ENCODE measurements at regions of chr6 and their contacts with region 1.

Region 1: DNA sequence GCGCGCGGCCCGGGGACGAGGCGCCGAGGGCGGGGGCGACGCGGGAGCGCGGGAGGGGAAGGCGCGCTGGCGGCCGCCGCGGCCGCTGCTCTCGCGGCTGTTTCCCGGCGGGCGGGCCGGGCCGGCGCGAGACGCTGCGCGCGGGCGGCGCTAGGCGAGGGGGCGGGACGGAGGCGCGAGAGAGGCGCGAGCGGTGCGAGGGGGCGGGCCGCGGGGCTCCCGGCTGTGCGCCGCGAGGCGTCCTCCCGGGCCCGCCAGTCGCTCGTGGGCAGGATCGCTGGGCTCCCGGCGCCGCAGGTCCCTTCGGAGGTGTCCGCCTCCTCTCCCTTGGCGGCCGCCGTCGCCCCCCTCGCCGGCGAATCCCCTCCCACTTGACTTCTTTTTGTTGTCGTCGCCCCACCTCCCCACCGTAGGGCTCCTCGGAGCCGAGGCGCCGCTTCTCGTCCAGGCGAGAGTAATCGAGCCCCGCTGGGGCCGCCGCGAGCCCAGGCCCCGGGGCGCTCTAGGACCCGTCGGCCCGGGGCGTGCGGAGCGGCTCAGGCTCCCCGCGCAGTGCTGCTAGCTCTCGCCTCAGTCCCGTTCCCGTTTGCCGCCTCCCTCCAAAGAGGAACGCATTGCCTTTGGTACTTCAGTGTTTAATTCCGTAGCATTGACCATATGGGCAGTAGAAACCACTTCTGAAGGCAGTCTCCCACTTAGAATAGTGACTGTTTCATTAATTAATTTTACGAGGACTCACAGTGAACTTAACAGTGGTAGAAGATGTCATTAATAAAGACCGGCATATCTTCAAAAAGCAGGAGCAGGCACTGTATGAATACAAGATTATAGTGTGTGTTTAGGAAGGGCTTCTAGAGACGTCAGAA is at the start of gene RANBP9:
- DNase-seq: peak; percentile 88
- H3K4me3 Mint-ChIP-seq: peak within 1 kb of the TSS; percentile 87
- H3K27ac Mint-ChIP-seq: peak within 1 kb of the TSS; percentile 89
- H3K4me1 Mint-ChIP-seq: peaks cover 51% of the 10 kb centered on the region
- H3K27me3 Mint-ChIP-seq: no peaks in the 10 kb centered on the region
- total RNA-seq, gene RANBP9: 66.8 to 69.1 TPM

Region 2: DNA sequence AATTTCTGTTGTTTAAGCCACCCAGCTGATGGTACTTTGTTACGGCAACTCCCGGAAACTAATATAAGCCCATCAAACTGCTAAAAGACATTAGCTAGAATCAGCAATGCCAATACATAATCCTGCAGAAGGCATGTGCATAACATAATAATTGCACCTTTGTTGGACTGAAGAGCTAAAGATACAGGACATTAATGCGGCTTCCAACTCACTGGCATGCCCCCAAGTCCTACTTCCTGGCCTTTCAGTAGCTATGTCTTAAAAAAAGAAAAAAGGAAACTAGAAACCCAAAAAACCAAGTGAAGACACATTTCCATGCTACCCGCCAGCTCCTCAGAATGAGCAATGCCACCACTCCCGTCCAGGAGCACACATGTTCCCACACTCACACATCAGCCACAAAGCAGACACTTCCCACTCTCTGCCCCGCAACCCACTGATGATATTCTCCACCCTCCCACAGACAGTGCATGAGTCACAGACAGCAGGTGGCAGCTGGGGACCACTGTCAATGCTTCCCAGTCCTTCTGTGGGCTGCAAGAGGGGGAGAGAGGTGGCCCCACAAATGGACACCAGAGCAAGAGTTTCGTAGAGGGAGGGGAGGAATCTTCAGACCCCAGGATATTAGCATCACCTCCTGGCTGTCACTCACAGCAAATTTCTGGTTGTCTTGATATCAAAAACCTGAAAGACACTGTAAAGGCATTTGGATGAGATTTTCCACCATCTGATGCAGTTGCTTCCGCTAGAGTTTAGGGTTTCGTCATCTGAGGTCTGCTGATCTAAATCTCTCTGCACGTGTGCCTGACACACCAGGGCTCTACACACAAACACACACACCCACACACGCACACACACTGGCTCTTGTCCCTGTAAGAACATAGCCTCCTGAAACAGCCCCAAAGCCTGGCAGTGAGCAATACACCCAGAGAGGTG is 257.4 kb before region 1 on chr6:
- CTCF ChIA-PET with region 1: no interaction called
- POLR2A ChIA-PET with region 1: no interaction called
- DNase-seq: peak; percentile 67
- H3K4me3 Mint-ChIP-seq: no peak overlapping the region
- H3K27ac Mint-ChIP-seq: peak overlapping the region; percentile 8
- H3K4me1 Mint-ChIP-seq: peaks cover 28% of the 10 kb centered on the region
- H3K27me3 Mint-ChIP-seq: no peaks in the 10 kb centered on the region

Region 3: GRCh38 chr6:13586603-13587542 is 125.1 kb before region 1 on chr6:
- CTCF ChIA-PET with region 1: no interaction called
- POLR2A ChIA-PET with region 1: no interaction called
- DNase-seq: no peak
- H3K4me3 Mint-ChIP-seq: no peak overlapping the region
- H3K27ac Mint-ChIP-seq: no peak overlapping the region
- H3K4me1 Mint-ChIP-seq: no peaks in the 10 kb centered on the region
- H3K27me3 Mint-ChIP-seq: no peaks in the 10 kb centered on the region

Region 4: GRCh38 chr6:13681305-13682061 is 30.5 kb before region 1 on chr6:
- CTCF ChIA-PET with region 1: interaction called, 3 read pairs
- POLR2A ChIA-PET with region 1: interaction called, 25 read pairs
- DNase-seq: no peak
- H3K4me3 Mint-ChIP-seq: peak overlapping the region; percentile 51
- H3K27ac Mint-ChIP-seq: peak overlapping the region; percentile 85
- H3K4me1 Mint-ChIP-seq: peaks cover 45% of the 10 kb centered on the region
- H3K27me3 Mint-ChIP-seq: no peaks in the 10 kb centered on the region

Region 5: DNA sequence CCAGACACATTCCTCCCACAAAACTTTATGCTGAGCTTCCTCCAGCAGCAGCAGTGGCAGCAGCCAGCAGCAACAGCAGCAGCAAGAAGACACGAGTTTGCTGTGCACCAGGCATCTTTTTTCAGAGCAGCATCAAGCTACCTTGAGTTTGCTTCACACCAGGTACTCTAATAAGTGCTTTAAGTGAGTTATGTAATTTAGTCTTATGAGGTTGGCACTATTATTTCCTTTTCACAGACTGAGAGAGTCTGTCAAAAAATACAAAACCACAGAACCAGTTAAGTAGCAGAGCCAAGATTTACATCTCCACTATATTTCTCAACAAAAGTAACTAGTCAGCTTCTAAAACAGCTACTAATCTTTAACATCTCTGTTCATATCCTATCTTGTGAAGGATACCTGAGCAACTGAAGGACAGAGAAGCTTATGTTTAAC is 24.0 kb before region 1 on chr6:
- CTCF ChIA-PET with region 1: interaction called, 3 read pairs
- POLR2A ChIA-PET with region 1: interaction called, 27 read pairs
- DNase-seq: no peak
- H3K4me3 Mint-ChIP-seq: no peak overlapping the region
- H3K27ac Mint-ChIP-seq: peak overlapping the region; percentile 58
- H3K4me1 Mint-ChIP-seq: peaks cover 51% of the 10 kb centered on the region
- H3K27me3 Mint-ChIP-seq: no peaks in the 10 kb centered on the region

Region 6: GRCh38 chr6:13696226-13696625 is 15.7 kb before region 1 on chr6:
- CTCF ChIA-PET with region 1: interaction called, 6 read pairs
- POLR2A ChIA-PET with region 1: interaction called, 59 read pairs
- DNase-seq: no peak
- H3K4me3 Mint-ChIP-seq: no peak overlapping the region
- H3K27ac Mint-ChIP-seq: no peak overlapping the region
- H3K4me1 Mint-ChIP-seq: peaks cover 52% of the 10 kb centered on the region
- H3K27me3 Mint-ChIP-seq: no peaks in the 10 kb centered on the region

Region 7: GRCh38 chr6:13742961-13743735 is 31.2 kb after region 1 on chr6:
- CTCF ChIA-PET with region 1: no interaction called
- POLR2A ChIA-PET with region 1: interaction called, 12 read pairs
- DNase-seq: no peak
- H3K4me3 Mint-ChIP-seq: no peak overlapping the region
- H3K27ac Mint-ChIP-seq: no peak overlapping the region
- H3K4me1 Mint-ChIP-seq: peaks cover 17% of the 10 kb centered on the region
- H3K27me3 Mint-ChIP-seq: peaks cover 2% of the 10 kb centered on the region

Region 8: DNA sequence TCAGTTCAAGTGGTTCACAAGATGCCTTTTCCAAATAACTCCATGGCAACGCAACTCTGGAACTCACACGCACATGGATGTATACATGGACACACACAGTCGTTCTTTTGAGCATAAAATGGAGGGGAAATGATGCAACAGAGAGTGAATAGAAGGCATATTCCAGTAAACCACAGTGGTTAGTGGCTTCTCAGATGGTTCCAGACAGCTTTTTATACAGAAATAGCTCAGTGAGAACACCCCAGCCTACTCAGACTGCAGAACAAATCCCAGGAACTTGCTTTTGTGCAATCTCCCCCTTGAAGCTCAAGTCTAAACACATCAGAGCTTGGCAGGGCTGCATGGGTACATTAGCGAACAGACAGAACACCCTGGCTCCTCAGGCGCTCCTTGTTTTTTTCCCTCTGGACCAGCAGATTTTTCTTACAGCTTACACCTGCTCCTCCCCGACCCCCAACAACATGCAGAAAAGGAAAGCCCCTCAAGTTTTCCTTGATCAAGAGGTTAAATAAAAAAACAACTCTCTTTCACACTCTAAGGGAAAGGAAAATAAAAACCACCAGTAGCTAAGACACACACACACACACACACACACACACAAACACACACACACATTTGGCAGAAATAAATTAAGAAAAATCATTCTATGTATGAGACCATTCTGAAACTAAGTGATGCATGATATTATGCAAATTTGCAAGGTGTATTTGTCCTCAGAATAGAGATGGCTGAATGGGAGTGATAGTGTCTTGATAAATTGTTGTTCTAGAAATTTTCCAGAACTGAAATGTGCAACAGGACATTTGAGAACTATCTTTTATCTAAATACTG is 50.9 kb after region 1 on chr6:
- CTCF ChIA-PET with region 1: interaction called, 3 read pairs
- POLR2A ChIA-PET with region 1: interaction called, 14 read pairs
- DNase-seq: peak; percentile 34
- H3K4me3 Mint-ChIP-seq: peak overlapping the region; percentile 54
- H3K27ac Mint-ChIP-seq: peak overlapping the region; percentile 76
- H3K4me1 Mint-ChIP-seq: peaks cover 57% of the 10 kb centered on the region
- H3K27me3 Mint-ChIP-seq: no peaks in the 10 kb centered on the region

Region 9: GRCh38 chr6:13814176-13814937 is 102.4 kb after region 1 on chr6 and contains the start of gene MCUR1:
- CTCF ChIA-PET with region 1: no interaction called
- POLR2A ChIA-PET with region 1: interaction called, 17 read pairs
- DNase-seq: peak; percentile 85
- H3K4me3 Mint-ChIP-seq: peak within 1 kb of the TSS; percentile 85
- H3K27ac Mint-ChIP-seq: peak within 1 kb of the TSS; percentile 78
- H3K4me1 Mint-ChIP-seq: peaks cover 36% of the 10 kb centered on the region
- H3K27me3 Mint-ChIP-seq: peaks cover 6% of the 10 kb centered on the region
- total RNA-seq, gene MCUR1: 23.1 to 23.4 TPM